ENCODE measurements at regions of chr20 and their contacts with region 1.

Region 1: GRCh38 chr20:34129518-34130162 is 17.6 kb upstream of the EIF2S2 start:
- DNase-seq: peak; percentile 66
- H3K4me3 Mint-ChIP-seq: no peak overlapping the region
- H3K27ac Mint-ChIP-seq: no peak overlapping the region
- H3K4me1 Mint-ChIP-seq: peaks cover 8% of the 10 kb centered on the region
- H3K27me3 Mint-ChIP-seq: no peaks in the 10 kb centered on the region

Region 2: GRCh38 chr20:33791959-33792597 is 337.6 kb before region 1 on chr20:
- CTCF ChIA-PET with region 1: interaction called, 3 read pairs
- intact Hi-C with region 1: loop called (anchors 1 kb)
- DNase-seq: peak; percentile 60
- H3K4me3 Mint-ChIP-seq: no peak overlapping the region
- H3K27ac Mint-ChIP-seq: no peak overlapping the region
- H3K4me1 Mint-ChIP-seq: no peaks in the 10 kb centered on the region
- H3K27me3 Mint-ChIP-seq: no peaks in the 10 kb centered on the region

Region 3: GRCh38 chr20:33915726-33916331 is 213.8 kb before region 1 on chr20:
- CTCF ChIA-PET with region 1: interaction called, 18 read pairs
- intact Hi-C with region 1: loop called (anchors 1 kb)
- DNase-seq: peak; percentile 71
- H3K4me3 Mint-ChIP-seq: no peak overlapping the region
- H3K27ac Mint-ChIP-seq: no peak overlapping the region
- H3K4me1 Mint-ChIP-seq: peaks cover 11% of the 10 kb centered on the region
- H3K27me3 Mint-ChIP-seq: no peaks in the 10 kb centered on the region

Region 4: DNA sequence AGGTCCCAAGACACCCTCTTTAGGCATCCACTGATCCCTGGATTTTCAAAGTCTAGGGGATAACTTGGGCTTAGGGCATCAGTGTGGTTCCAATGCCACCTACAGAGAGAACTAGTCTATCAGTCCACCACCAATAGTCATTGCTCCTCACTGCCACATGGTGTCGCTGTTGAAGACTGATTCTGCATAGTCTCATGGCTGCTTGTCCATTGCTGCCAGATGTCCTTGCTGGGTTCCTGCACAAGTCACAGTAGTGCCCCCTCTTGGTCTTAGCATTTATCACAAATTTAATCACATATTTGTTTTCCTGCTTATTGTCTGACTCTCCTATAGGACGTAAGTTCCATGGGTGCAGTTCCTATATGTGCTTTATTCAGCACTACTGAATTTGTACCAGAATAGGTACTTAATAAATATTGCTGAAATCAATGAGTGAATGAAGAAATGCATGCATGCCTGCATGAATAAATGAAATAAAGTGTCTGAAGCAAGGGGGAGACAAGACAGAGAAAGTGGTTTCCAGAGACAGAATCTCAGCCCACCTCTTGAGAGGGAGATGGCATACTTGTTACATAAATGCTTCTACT is 181.8 kb before region 1 on chr20:
- CTCF ChIA-PET with region 1: no interaction called
- intact Hi-C with region 1: loop called (anchors 1 kb)
- DNase-seq: peak; percentile 75
- H3K4me3 Mint-ChIP-seq: no peak overlapping the region
- H3K27ac Mint-ChIP-seq: no peak overlapping the region
- H3K4me1 Mint-ChIP-seq: no peaks in the 10 kb centered on the region
- H3K27me3 Mint-ChIP-seq: peaks cover 3% of the 10 kb centered on the region

Region 5: GRCh38 chr20:33984182-33984719 is 145.4 kb before region 1 on chr20:
- CTCF ChIA-PET with region 1: no interaction called
- intact Hi-C with region 1: no loop called
- DNase-seq: no peak
- H3K4me3 Mint-ChIP-seq: no peak overlapping the region
- H3K27ac Mint-ChIP-seq: no peak overlapping the region
- H3K4me1 Mint-ChIP-seq: no peaks in the 10 kb centered on the region
- H3K27me3 Mint-ChIP-seq: peaks cover 2% of the 10 kb centered on the region

Region 6: DNA sequence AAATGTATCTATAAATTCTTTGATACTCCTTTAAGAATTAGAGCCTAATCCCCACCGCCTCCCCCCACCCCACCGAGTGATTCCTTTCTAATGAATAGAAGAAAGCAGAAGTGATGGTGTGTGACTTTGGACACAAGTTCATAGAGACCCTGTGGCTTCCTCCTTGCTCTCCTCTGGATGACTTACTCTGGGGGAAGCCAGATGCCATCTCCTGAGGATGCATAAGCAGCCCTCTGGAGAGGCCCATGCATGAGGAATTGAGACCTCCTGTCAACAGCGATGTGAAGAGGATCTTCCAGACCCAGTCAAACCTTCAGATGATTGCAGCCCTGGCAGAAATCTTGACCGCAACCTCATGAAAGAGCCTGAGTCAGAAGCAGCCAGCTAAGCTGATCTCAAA is 152.4 kb after region 1 on chr20:
- CTCF ChIA-PET with region 1: no interaction called
- intact Hi-C with region 1: no loop called
- DNase-seq: no peak
- H3K4me3 Mint-ChIP-seq: no peak overlapping the region
- H3K27ac Mint-ChIP-seq: no peak overlapping the region
- H3K4me1 Mint-ChIP-seq: no peaks in the 10 kb centered on the region
- H3K27me3 Mint-ChIP-seq: no peaks in the 10 kb centered on the region